ENCODE measurements at regions of chr12 and their contacts with region 1.

Region 1: GRCh38 chr12:53344824-53345485 is 8.8 kb upstream of the SP7 start:
- DNase-seq: peak; percentile 76 to 88 (median 83)
- H3K4me3 ChIP-seq: peak overlapping the region in 3 of 4 donors; percentile 62 to 90 (median 81)
- H3K27ac ChIP-seq: peak overlapping the region; percentile 11 to 90 (median 71)
- H3K4me1 ChIP-seq: peaks cover 0 to 12% of the 10 kb centered on the region in 2 donors
- H3K27me3 ChIP-seq: no peaks in the 10 kb centered on the region
- CTCF ChIP-seq: peak; percentile 43 to 78 (median 68)
- POLR2A ChIP-seq: peak in 1 of 2 donors; percentile 54

Region 2: GRCh38 chr12:53518381-53518780 is 173.4 kb after region 1 on chr12:
- intact Hi-C with region 1: loop called in 1 of 2 experiments (anchors 10 kb)
- DNase-seq: peak in 2 of 7 donors; percentile 26 to 49
- H3K4me3 ChIP-seq: no peak overlapping the region
- H3K27ac ChIP-seq: no peak overlapping the region
- H3K4me1 ChIP-seq: peaks cover 0 to 6% of the 10 kb centered on the region in 2 donors
- H3K27me3 ChIP-seq: no peaks in the 10 kb centered on the region
- CTCF ChIP-seq: no peak
- POLR2A ChIP-seq: no peak

Region 3: DNA sequence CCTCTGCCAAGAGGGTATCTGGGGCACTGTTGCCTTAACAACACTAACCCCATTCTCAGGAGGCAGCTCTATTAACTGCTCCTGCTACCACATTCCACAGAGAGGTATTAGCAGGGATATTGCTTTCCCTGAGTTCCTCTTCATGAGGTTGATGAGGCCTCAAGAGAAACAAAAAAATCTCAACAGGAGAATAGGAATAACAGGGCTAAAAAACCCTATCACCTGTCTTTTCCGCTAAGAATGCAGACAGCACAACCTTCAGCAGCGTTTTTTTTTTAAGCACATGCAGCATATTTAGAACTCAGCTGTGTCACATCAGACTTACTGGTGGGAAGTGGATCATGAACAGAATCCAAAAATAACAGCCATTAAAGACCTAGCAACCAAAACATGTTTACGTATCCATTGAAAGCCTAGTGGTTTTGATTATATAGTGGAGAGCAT is 252.0 kb after region 1 on chr12:
- intact Hi-C with region 1: no loop called
- DNase-seq: no peak
- H3K4me3 ChIP-seq: no peak overlapping the region
- H3K27ac ChIP-seq: peak overlapping the region in 1 of 5 donors; percentile 24
- H3K4me1 ChIP-seq: peaks cover 6 to 46% of the 10 kb centered on the region in 2 donors
- H3K27me3 ChIP-seq: no peaks in the 10 kb centered on the region
- CTCF ChIP-seq: no peak
- POLR2A ChIP-seq: no peak